Activated B cell treated with CpG ODN at 0.5 μM for 24 hours (primary cell): ENCODE measurements at regions of chr2 and their contacts with region 1.

Region 1: GRCh38 chr2:68441179-68441993 is 25.7 kb downstream of the FBXO48 start:
- DNase-seq: peak; percentile 57
- ATAC-seq: peak; percentile 98
- H3K4me3 Mint-ChIP-seq: peak overlapping the region; percentile 65
- H3K27ac Mint-ChIP-seq: peak overlapping the region; percentile 95
- H3K4me1 Mint-ChIP-seq: peaks cover 51% of the 10 kb centered on the region
- H3K27me3 Mint-ChIP-seq: no peaks in the 10 kb centered on the region
- CTCF ChIP-seq: no peak

Region 2: GRCh38 chr2:68157402-68158133 is 283.8 kb before region 1 on chr2 and contains the start of gene PNO1:
- CTCF ChIA-PET with region 1: no interaction called
- POLR2A ChIA-PET with region 1: no interaction called
- intact Hi-C with region 1: loop called (anchors 1 kb)
- DNase-seq: peak; percentile 94
- ATAC-seq: peak; percentile 95
- H3K4me3 Mint-ChIP-seq: peak within 1 kb of the TSS; percentile 99
- H3K27ac Mint-ChIP-seq: peak within 1 kb of the TSS; percentile 100
- H3K4me1 Mint-ChIP-seq: peaks cover 55% of the 10 kb centered on the region
- H3K27me3 Mint-ChIP-seq: no peaks in the 10 kb centered on the region
- CTCF ChIP-seq: no peak
- total RNA-seq, gene PNO1: 22.1 and 24.9 TPM in 2 replicates

Region 3: GRCh38 chr2:68282811-68283418 is 158.5 kb before region 1 on chr2:
- CTCF ChIA-PET with region 1: interaction called, 19 read pairs
- POLR2A ChIA-PET with region 1: no interaction called
- intact Hi-C with region 1: loop called (anchors 1 kb)
- DNase-seq: no peak
- ATAC-seq: peak; percentile 69
- H3K4me3 Mint-ChIP-seq: no peak overlapping the region
- H3K27ac Mint-ChIP-seq: no peak overlapping the region
- H3K4me1 Mint-ChIP-seq: peaks cover 6% of the 10 kb centered on the region
- H3K27me3 Mint-ChIP-seq: no peaks in the 10 kb centered on the region
- CTCF ChIP-seq: peak; percentile 82

Region 4: DNA sequence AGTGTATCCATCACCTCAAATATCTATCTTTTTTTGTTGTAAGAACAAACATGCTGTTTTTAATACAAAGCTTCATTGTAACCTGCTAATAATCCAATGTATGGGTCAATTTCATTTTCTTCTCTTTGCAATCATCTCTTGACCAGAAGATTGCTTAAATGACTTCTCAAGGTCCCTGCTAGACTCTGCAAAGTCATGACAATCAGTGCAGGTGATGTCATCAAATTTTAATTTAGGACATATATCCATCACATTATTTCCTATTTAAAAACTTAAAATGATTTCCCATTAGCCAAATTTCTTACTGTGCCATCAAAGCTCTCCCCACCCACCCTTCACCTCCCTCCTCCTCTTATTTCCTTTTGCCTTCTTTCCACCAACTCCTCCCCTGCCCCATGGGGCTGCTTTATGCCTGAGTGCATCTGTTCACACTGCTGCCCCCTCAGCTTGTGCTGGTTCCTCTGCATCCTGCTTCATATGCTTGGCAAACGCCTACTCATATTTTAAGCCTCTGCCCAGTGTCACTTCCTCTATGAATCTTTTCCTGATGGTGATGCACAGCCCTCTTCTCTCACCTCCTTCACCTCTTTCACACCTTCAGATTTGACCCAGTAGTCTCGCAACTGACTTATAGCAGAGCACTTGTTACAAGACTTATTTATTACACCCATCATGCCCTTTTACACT is 56.0 kb before region 1 on chr2:
- CTCF ChIA-PET with region 1: interaction called, 6 read pairs
- POLR2A ChIA-PET with region 1: interaction called, 10 read pairs
- intact Hi-C with region 1: loop called (anchors 1 kb)
- DNase-seq: no peak
- ATAC-seq: peak; percentile 69
- H3K4me3 Mint-ChIP-seq: peak overlapping the region; percentile 29
- H3K27ac Mint-ChIP-seq: peak overlapping the region; percentile 91
- H3K4me1 Mint-ChIP-seq: peaks cover 97% of the 10 kb centered on the region
- H3K27me3 Mint-ChIP-seq: no peaks in the 10 kb centered on the region
- CTCF ChIP-seq: no peak

Region 5: GRCh38 chr2:68411397-68412126 is 29.8 kb before region 1 on chr2:
- CTCF ChIA-PET with region 1: interaction called, 8 read pairs
- POLR2A ChIA-PET with region 1: interaction called, 4 read pairs
- intact Hi-C with region 1: loop called (anchors 1 kb)
- DNase-seq: no peak
- ATAC-seq: peak; percentile 98
- H3K4me3 Mint-ChIP-seq: peak overlapping the region; percentile 78
- H3K27ac Mint-ChIP-seq: peak overlapping the region; percentile 93
- H3K4me1 Mint-ChIP-seq: peaks cover 97% of the 10 kb centered on the region
- H3K27me3 Mint-ChIP-seq: no peaks in the 10 kb centered on the region
- CTCF ChIP-seq: no peak

Region 6: GRCh38 chr2:68423966-68424650 is 17.3 kb before region 1 on chr2:
- CTCF ChIA-PET with region 1: interaction called, 17 read pairs
- POLR2A ChIA-PET with region 1: interaction called, 7 read pairs
- intact Hi-C with region 1: loop called (anchors 1 kb)
- DNase-seq: no peak
- ATAC-seq: peak; percentile 78
- H3K4me3 Mint-ChIP-seq: no peak overlapping the region
- H3K27ac Mint-ChIP-seq: no peak overlapping the region
- H3K4me1 Mint-ChIP-seq: peaks cover 29% of the 10 kb centered on the region
- H3K27me3 Mint-ChIP-seq: no peaks in the 10 kb centered on the region
- CTCF ChIP-seq: no peak

Region 7: DNA sequence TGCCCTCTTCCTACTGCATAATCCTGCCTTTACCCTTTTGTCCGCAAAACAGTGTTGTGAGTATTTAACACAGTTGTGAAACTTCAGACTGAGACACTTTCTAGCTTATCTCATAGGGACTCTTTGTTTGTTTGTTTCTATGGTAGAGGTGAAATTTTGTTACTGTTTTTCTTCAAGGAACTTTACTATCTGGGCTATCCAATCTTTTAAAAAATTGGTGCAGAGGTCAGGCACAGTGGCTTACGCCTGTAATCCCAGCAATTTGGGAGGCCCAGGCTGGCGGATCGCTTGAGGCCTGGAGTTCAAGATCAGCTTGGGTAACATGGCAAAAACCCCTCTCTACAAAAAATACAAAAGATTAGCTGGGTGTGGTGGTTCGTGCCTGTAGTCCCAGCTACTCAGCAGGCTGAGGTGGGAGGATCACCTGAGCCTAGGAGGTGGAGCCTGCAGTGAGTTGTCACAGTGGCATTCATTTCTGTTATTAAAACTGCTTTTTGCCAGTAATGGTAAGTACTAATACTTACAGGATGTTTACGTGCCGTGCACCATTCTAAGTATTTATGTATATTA is 1406.9 kb after region 1 on chr2:
- CTCF ChIA-PET with region 1: no interaction called
- POLR2A ChIA-PET with region 1: no interaction called
- intact Hi-C with region 1: no loop called
- DNase-seq: no peak
- ATAC-seq: no peak
- H3K4me3 Mint-ChIP-seq: no peak overlapping the region
- H3K27ac Mint-ChIP-seq: no peak overlapping the region
- H3K4me1 Mint-ChIP-seq: no peaks in the 10 kb centered on the region
- H3K27me3 Mint-ChIP-seq: no peaks in the 10 kb centered on the region
- CTCF ChIP-seq: no peak